PC-3 (cell line): ENCODE measurements at regions of chr12 and their contacts with region 1.

Region 1: GRCh38 chr12:118035246-118036041 is 18.9 kb downstream of the RFC5 start:
- DNase-seq: peak; percentile 50
- ATAC-seq: peak; percentile 28
- H3K4me3 ChIP-seq: no peak overlapping the region
- H3K27ac ChIP-seq: 0 out of 2 replicates have a peak overlapping the region, but pooled peaks have one; percentile 1
- H3K4me1 ChIP-seq: peaks cover 36% of the 10 kb centered on the region
- H3K27me3 ChIP-seq: no peaks in the 10 kb centered on the region
- CTCF ChIP-seq: no peak

Region 2: GRCh38 chr12:117874842-117875434 is 160.5 kb before region 1 on chr12:
- CTCF ChIA-PET with region 1: interaction called, 31 read pairs
- POLR2A ChIA-PET with region 1: no interaction called
- intact Hi-C with region 1: loop called (anchors 1 kb)
- DNase-seq: peak; percentile 87
- ATAC-seq: peak; percentile 90
- H3K4me3 ChIP-seq: no peak overlapping the region
- H3K27ac ChIP-seq: no peak overlapping the region
- H3K4me1 ChIP-seq: no peaks in the 10 kb centered on the region
- H3K27me3 ChIP-seq: no peaks in the 10 kb centered on the region
- CTCF ChIP-seq: peak; percentile 94

Region 3: GRCh38 chr12:117968826-117969659 is 66.4 kb before region 1 on chr12 and contains the start of gene KSR2:
- CTCF ChIA-PET with region 1: no interaction called
- POLR2A ChIA-PET with region 1: no interaction called
- intact Hi-C with region 1: loop called (anchors 5 kb)
- DNase-seq: peak; percentile 92
- ATAC-seq: peak; percentile 91
- H3K4me3 ChIP-seq: peak within 1 kb of the TSS; percentile 89
- H3K27ac ChIP-seq: peak within 1 kb of the TSS; percentile 68
- H3K4me1 ChIP-seq: peaks cover 24% of the 10 kb centered on the region
- H3K27me3 ChIP-seq: no peaks in the 10 kb centered on the region
- CTCF ChIP-seq: no peak
- total RNA-seq, gene KSR2: 0.80 and 2.8 TPM in 2 replicates

Region 4: GRCh38 chr12:118055144-118055557 is 19.7 kb after region 1 on chr12:
- CTCF ChIA-PET with region 1: interaction called, 6 read pairs
- POLR2A ChIA-PET with region 1: interaction called, 3 read pairs
- intact Hi-C with region 1: loop called (anchors 1 kb)
- DNase-seq: peak; percentile 78
- ATAC-seq: no peak
- H3K4me3 ChIP-seq: no peak overlapping the region
- H3K27ac ChIP-seq: no peak overlapping the region
- H3K4me1 ChIP-seq: peaks cover 64% of the 10 kb centered on the region
- H3K27me3 ChIP-seq: no peaks in the 10 kb centered on the region
- CTCF ChIP-seq: peak; percentile 91

Region 5: DNA sequence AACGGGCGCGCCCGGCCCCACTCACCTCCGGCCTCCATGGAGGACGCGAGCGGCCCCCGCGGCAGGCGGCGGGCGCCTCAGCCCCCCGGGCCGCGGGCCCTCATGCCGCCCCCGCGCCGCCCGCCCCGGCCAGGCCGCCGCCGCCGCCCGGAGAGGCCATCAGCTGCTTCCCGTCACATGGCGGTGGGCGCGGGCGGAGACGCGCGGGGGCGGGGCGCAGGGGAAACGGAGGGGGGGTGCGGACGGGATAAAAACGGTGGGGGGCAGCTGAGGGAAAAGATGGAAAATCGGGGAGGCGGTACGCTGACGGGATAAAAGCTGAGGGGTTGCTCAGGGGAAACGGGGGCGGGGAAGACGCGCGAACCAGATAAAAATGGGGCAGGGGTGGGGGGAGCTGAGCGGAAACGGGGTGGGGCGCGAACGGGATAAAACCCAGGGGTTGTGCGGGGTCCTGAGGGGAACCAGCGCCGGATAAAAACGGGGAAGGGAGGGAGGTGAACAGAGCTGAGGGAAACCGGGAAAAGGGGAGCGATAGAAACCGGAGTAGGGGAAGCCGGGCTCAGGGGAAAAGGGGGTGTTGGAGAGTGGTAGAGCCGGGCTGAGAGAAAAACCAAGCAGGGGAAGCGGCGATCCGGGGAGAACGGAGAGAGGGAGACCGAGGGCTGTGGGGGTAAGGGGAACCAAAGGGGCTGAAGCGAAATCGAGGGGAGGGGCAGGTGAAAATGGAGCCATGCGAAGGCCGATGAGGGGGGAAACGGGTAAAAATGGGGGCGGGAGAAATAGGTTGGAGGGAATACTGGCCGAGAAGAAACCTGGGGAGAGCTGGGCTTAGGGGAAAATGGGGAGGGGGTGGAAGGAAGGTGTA is 25.8 kb after region 1 on chr12 and contains the start of gene WSB2:
- CTCF ChIA-PET with region 1: interaction called, 10 read pairs
- POLR2A ChIA-PET with region 1: interaction called, 3 read pairs
- intact Hi-C with region 1: no loop called
- DNase-seq: peak; percentile 41
- ATAC-seq: peak; percentile 6
- H3K4me3 ChIP-seq: peak within 1 kb of the TSS; percentile 93
- H3K27ac ChIP-seq: peak within 1 kb of the TSS; percentile 86
- H3K4me1 ChIP-seq: peaks cover 40% of the 10 kb centered on the region
- H3K27me3 ChIP-seq: no peaks in the 10 kb centered on the region
- CTCF ChIP-seq: no peak
- total RNA-seq, gene WSB2: 166 and 203 TPM in 2 replicates

Region 6: GRCh38 chr12:118089782-118090181 is 54.3 kb after region 1 on chr12:
- CTCF ChIA-PET with region 1: no interaction called
- POLR2A ChIA-PET with region 1: no interaction called
- intact Hi-C with region 1: no loop called
- DNase-seq: no peak
- ATAC-seq: no peak
- H3K4me3 ChIP-seq: no peak overlapping the region
- H3K27ac ChIP-seq: no peak overlapping the region
- H3K4me1 ChIP-seq: peaks cover 3% of the 10 kb centered on the region; the same call in 1 of the 2 replicates
- H3K27me3 ChIP-seq: no peaks in the 10 kb centered on the region
- CTCF ChIP-seq: no peak